Head of caudate nucleus (tissue), 42 donors: ENCODE measurements at regions of chr4 and their contacts with region 1.

Region 1: DNA sequence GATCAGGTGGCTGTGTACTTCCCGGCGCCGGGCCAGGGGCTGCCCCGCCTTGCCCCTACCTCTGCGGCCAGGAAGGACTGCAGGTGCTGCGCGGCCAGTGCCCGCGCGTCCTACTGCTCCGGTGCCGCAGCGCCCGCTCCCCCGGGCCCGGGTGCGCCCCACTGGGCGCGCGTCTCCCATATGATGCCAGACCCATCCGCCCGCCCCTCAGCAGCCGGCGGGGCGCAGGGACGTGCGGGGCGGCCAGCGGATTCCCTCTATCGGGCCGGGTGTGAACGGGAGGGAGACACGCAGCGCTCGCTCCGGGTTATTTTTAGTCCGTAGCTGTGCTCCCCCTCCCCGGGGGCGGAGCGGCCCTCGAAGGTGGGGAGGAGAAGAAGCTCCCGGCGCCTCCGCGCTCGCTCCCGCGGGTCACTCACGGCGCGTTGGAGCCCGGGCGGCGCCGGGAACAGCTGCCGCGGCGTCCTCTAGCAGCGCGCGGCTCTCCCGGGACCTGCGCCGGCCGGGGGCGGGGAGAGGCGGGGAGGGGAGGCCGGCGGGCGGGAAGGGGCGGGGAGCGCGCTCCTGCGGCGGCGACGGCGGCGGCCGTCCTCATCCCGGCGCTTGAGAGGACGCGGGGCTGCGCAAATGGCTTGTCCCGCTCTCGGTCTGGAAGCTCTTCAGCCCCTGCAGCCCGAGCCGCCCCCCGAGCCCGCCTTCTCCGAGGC is 103.6 kb downstream of the UCHL1 start:
- DNase-seq: peak; percentile 26 to 93 (median 83)

Region 2: GRCh38 chr4:40662962-40663604 is 697.3 kb before region 1 on chr4:
- intact Hi-C with region 1: no loop called
- DNase-seq: no peak

Region 3: GRCh38 chr4:41427306-41427882 is 67.0 kb after region 1 on chr4:
- intact Hi-C with region 1: loop called (anchors 10 kb)
- DNase-seq: no peak

Region 4: DNA sequence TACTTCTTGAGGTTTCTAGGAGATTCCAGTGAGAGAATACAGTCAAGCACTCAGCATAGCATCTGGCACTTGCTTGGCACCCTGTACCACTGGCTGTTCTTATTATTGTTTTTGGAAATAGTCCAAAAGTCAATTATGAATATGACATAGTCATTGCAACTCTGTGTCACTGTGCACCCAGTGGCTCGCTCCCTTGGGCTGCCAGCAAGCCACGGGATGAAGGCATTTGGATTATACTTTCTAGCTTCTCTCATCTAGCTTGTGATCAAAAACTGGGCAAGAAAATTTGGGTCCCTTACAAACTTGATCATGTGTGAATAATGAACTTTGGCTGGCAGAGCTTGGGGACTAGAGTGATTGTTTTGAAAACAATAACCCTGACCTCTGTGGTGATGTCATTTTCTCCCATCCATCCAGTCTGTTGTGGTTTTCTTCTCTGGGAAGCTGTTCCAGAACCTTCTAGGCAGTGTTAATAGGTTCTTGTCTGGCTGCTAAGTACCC is 144.8 kb after region 1 on chr4:
- intact Hi-C with region 1: loop called (anchors 10 kb)
- DNase-seq: peak in 35 of 42 donors; percentile 12 to 85 (median 38)